Activated CD4-positive, alpha-beta memory T cell treated with anti-CD3 and anti-CD28 coated beads for 36 hours (primary cell): ENCODE measurements at regions of chr9 and their contacts with region 1.

Region 1: DNA sequence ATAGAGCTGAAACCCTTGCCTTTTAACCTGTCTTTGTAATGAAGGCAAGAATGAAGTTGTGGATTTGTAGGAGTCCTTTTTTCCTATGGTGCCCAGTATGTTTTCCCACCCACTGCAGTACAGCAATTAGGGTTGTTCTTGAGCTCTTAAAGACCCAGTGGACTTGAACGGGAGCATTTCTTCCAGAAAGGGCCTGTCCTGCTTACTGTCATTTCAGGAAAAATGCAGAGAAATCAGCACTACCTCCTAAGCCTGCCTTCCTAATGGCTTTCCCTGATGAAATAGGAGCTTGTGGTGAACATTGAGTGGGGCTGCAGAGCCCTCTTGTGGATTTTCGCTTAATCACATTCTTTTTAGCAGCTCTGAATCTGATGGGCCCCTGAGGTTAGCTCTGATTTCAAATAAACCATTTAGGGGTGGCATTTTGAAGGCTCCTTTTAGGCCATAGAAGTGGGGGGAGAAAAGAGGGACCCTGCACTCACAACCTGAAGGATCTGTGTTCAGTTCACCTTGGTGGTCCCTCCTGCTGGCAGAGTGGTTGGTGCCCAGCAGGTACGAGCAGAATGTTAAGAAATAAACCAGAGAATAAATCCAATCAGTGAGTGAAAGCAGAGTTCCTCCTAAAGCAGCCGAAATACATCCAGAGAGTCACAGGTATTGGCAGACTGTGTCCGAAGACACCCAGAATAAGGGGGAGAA is 188.0 kb upstream of the KLF9 start:
- DNase-seq: peak; percentile 55
- H3K4me3 Mint-ChIP-seq: no peak overlapping the region
- H3K27ac Mint-ChIP-seq: no peak overlapping the region
- H3K4me1 Mint-ChIP-seq: no peaks in the 10 kb centered on the region
- H3K27me3 Mint-ChIP-seq: no peaks in the 10 kb centered on the region

Region 2: DNA sequence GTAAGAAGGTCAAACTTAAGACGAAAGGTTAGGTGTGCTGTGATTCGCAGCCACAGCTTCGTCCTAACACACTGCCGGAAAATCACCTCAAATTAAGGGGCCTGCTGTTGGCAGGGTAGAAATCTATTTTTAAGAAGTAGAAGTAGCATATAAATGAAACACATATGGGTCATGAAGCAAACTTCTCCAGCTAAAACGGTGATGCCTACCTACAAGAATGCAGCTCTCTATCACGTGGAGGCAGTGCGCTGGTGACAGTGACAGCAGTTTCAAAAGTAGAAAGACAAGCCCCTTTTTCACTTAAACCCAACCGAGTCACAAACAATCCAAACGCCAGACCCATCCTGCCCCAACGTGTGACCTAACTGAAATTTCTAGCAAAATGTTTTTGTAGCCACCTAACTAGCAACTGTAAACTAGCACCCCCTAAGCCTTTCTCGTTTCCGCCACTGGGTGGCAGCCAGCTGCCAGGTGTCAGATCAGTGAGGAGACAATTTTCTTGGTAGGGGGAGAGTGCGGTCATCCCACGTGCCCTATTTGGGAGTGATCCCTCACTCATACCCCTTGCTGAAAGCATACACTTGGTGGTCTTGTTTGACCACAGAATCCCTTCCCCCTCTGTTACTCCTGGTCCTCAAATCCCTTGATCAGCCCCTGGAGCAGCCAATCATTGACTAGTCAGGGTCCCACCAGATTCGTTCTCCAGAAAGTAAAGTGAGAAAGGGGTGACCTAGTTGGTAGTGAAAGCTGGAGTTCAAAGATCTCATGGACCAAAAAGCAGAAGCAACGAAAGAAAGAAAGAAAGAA is 630.6 kb before region 1 on chr9:
- CTCF ChIA-PET with region 1: interaction called, 21 read pairs
- POLR2A ChIA-PET with region 1: no interaction called
- intact Hi-C with region 1: loop called (anchors 1 kb)
- DNase-seq: peak; percentile 69
- H3K4me3 Mint-ChIP-seq: no peak overlapping the region
- H3K27ac Mint-ChIP-seq: no peak overlapping the region
- H3K4me1 Mint-ChIP-seq: no peaks in the 10 kb centered on the region
- H3K27me3 Mint-ChIP-seq: peaks cover 15% of the 10 kb centered on the region

Region 3: DNA sequence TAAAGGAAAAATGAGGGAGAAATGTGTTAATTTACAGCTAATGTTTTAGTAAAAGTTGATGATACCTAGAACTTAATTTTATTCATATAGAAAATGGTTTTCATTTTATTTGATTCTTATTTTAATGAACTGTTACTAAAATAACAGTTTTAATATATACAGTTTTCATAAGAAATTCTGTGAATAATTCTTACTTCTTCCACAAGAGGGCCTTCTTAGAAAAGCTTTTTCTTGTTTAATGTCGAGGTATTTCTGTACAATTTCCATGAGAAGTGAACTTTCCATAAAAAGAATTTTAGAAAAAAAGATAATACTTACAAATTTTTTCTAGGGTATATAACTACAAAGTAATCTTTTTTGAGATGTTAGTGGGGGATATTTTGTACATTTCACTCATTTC is 261.9 kb before region 1 on chr9:
- CTCF ChIA-PET with region 1: interaction called, 77 read pairs
- POLR2A ChIA-PET with region 1: interaction called, 3 read pairs
- intact Hi-C with region 1: loop called (anchors 1 kb)
- DNase-seq: no peak
- H3K4me3 Mint-ChIP-seq: no peak overlapping the region
- H3K27ac Mint-ChIP-seq: no peak overlapping the region
- H3K4me1 Mint-ChIP-seq: peaks cover 4% of the 10 kb centered on the region
- H3K27me3 Mint-ChIP-seq: no peaks in the 10 kb centered on the region

Region 4: GRCh38 chr9:70392189-70392588 is 210.3 kb before region 1 on chr9:
- CTCF ChIA-PET with region 1: interaction called, 18 read pairs
- POLR2A ChIA-PET with region 1: no interaction called
- intact Hi-C with region 1: loop called (anchors 5 kb)
- DNase-seq: no peak
- H3K4me3 Mint-ChIP-seq: no peak overlapping the region
- H3K27ac Mint-ChIP-seq: no peak overlapping the region
- H3K4me1 Mint-ChIP-seq: peaks cover 78% of the 10 kb centered on the region
- H3K27me3 Mint-ChIP-seq: no peaks in the 10 kb centered on the region

Region 5: GRCh38 chr9:70419546-70420266 is 182.8 kb before region 1 on chr9:
- CTCF ChIA-PET with region 1: interaction called, 21 read pairs
- POLR2A ChIA-PET with region 1: interaction called, 10 read pairs
- intact Hi-C with region 1: loop called (anchors 1 kb)
- DNase-seq: peak; percentile 94
- H3K4me3 Mint-ChIP-seq: peak overlapping the region; percentile 92
- H3K27ac Mint-ChIP-seq: peak overlapping the region; percentile 99
- H3K4me1 Mint-ChIP-seq: peaks cover 39% of the 10 kb centered on the region
- H3K27me3 Mint-ChIP-seq: no peaks in the 10 kb centered on the region

Region 6: GRCh38 chr9:70563431-70564204 is 38.9 kb before region 1 on chr9:
- CTCF ChIA-PET with region 1: interaction called, 6 read pairs
- POLR2A ChIA-PET with region 1: interaction called, 3 read pairs
- intact Hi-C with region 1: loop called (anchors 1 kb)
- DNase-seq: peak; percentile 81
- H3K4me3 Mint-ChIP-seq: peak overlapping the region; percentile 38
- H3K27ac Mint-ChIP-seq: peak overlapping the region; percentile 88
- H3K4me1 Mint-ChIP-seq: peaks cover 47% of the 10 kb centered on the region
- H3K27me3 Mint-ChIP-seq: no peaks in the 10 kb centered on the region